ENCODE measurements at regions of chr11 and their contacts with region 1.

Region 1: DNA sequence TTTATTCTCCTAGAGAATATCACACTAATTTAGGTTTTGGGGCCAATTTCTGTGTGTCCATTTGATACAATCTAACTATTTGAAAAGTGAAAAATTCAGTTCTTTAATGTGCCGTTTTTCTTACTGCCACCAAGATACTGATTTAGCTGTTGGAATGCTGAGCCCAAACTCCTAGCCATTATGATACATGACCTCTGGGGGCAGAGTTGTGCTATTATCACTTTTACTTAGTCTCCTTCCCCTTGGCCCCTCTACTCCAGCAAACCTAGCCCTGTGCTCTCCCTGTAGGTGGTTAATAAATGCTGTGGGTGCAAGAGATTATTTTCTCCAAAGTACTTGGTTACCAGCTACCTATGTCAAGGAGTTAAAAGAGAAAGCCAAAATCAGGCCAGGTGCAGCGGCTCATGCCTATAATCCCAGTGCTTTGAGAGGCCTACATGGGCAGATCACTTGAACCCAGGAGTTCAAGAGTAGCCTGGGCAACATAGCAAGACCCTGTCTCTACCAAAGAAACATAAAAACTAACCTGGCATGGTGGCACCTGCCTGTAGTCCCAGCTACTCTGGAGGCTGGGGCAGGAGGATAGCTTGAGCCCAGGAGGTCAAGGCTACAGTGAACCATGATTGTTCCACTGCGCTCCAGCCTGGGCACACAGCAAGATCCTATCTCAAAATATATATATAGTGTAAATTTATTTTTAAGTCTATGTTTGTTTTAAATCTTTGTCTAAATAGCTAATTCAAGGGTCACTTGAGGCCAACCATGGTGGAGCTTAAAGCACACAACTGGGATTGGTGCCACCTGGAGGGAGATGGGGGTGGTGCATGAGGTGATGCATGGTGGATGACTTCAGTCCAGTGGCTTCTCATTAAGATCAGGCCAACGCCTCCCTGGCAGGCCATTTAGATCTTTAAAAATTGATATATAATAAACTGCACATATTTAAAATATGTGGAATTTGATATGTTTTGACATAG is 193.2 kb upstream of the PLET1 start:
- DNase-seq: peak; percentile 18 to 26
- ATAC-seq: no peak
- H3K4me3 ChIP-seq: no peak overlapping the region
- H3K27ac ChIP-seq: no peak overlapping the region
- H3K4me1 ChIP-seq: no peaks in the 10 kb centered on the region
- H3K27me3 ChIP-seq: no peaks in the 10 kb centered on the region
- CTCF ChIP-seq: peak in 7 of 9 donors; percentile 35 to 51 (median 48)

Region 2: GRCh38 chr11:112318193-112318592 is 135.7 kb before region 1 on chr11:
- intact Hi-C with region 1: loop called in 1 of 10 experiments (anchors 10 kb)
- DNase-seq: no peak
- ATAC-seq: peak in 7 of 8 donors; percentile 36 to 74 (median 48)
- H3K4me3 ChIP-seq: no peak overlapping the region
- H3K27ac ChIP-seq: peak overlapping the region in 4 of 10 donors; percentile 36 to 52 (median 40)
- H3K4me1 ChIP-seq: peaks cover 0 to 48% (median 31%) of the 10 kb centered on the region in 9 donors
- H3K27me3 ChIP-seq: no peaks in the 10 kb centered on the region
- CTCF ChIP-seq: no peak